PC-9 (cell line): ENCODE measurements at regions of chr9 and their contacts with region 1.

Region 1: GRCh38 chr9:99162759-99163364 is 57.9 kb downstream of the TGFBR1 start:
- DNase-seq: no peak
- H3K4me3 ChIP-seq: no peak overlapping the region
- H3K27ac ChIP-seq: no peak overlapping the region
- H3K4me1 ChIP-seq: no peaks in the 10 kb centered on the region
- H3K27me3 ChIP-seq: no peaks in the 10 kb centered on the region
- CTCF ChIP-seq: peak; percentile 79

Region 2: DNA sequence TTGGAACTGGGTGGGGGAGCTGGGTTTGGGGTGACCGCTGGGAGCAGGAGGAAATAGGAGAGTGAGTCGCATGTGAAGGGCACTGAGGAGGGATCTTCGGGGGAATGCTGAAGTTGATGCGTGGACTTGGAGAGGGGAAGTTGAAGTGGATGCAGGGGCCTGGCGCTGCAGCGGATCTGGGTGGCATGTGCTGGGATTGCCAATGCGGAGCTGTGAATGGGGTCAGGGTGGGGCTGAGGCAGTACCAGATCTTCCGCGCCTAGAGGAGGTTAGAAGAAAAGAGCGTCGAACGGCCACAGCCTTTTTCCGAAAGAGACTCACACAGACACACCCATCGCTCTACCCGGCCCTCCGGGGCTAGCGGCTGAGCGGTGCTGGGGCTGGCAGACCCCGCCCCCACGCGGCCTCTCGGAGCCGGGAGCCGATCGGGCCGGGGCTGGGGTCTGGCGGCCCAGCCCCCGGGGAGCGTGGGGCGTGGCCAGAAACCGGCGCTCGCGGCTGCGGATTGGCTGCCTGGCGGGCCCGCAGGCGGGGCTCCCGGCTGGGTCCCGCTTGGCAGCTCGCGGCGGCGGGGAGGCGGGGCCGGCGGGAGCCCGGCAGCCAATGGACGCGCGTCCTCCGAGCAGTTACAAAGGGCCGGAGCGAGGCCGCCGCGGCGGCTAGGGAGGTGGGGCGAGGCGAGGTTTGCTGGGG is 58.3 kb before region 1 on chr9 and contains the start of gene TGFBR1:
- CTCF ChIA-PET with region 1: no interaction called
- POLR2A ChIA-PET with region 1: no interaction called
- intact Hi-C with region 1: loop called (anchors 10 kb)
- DNase-seq: peak; percentile 77 to 97
- H3K4me3 ChIP-seq: peak within 1 kb of the TSS; percentile 76
- H3K27ac ChIP-seq: no peak within 1 kb of the TSS
- H3K4me1 ChIP-seq: peaks cover 17% of the 10 kb centered on the region
- H3K27me3 ChIP-seq: no peaks in the 10 kb centered on the region
- CTCF ChIP-seq: no peak
- total RNA-seq, gene TGFBR1: 17.1 and 18.3 TPM in 2 replicates